Right ventricle myocardium inferior (tissue), 1 donor: ENCODE measurements at regions of chr2 and their contacts with region 1.

Region 1: DNA sequence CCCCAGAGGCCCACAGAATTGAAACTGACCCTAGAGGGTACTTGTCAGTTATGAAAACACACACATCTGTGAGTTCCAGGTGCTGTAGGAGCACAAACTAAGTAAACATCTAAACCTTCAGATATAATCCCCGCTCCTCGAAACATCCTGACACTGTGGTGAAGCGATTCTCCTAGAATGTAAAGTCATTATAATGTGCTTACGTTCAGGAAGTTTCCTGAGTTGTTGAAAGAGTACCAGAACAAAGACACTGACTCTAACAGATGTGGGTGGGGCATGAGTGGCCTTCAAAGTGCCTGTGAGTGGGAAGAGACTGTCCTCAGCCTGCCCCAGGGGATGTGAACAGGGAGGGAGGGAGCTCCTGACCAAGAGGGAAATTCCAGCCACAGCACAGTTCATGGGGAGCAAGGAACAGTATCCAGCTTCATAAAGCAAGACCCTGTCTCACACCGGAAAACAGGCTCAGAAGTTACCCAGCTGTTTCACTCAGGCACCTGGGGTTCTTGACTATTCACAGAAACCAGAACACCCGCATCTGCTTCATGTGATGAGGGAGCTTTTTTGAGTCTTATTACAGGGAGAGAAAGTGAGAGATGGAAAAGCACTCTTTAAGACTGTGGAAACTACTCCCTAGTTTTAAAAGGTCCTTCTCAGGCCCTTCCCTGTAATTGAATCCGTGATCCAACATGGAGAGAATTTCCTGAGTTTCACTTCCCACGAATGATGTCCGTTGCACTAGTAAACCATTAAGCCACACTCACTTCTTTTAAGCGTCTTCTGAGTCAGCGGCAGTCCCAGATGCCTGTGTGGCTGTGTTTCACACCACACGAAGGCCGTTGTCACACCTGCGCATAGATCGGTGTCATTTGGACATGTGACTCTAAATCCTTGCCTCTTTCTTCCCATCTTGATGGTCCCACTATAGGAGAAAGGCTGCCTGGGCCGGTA is 88.6 kb upstream of the EML6 start:
- DNase-seq: peak; percentile 70
- ATAC-seq: peak; percentile 59

Region 2: GRCh38 chr2:54599914-54600313 is 34.9 kb before region 1 on chr2:
- intact Hi-C with region 1: loop called (anchors 5 kb)
- DNase-seq: no peak
- ATAC-seq: peak; percentile 20

Region 3: DNA sequence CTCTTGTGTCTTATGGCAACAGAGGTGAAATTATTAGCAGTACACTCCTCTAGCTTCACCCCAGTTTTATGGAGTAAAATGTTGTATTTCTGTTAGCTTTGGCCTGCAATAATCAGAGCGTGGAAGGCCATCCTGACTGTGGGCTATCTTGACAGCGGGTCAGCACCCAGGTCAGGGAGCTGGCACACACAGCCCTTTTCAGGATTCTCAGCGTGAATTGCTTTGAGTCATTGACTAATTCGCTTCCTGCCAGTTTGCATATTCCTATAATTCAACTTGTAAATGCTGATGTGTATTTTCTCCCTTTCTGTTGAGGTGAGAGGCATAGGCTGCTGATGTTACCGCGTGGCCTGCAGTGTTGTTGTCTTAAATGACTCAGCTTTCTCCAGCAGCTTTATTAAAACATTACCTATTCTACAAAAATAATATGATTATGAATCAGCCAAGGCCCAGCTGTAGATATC is 21.0 kb before region 1 on chr2:
- intact Hi-C with region 1: loop called (anchors 1 kb)
- DNase-seq: no peak
- ATAC-seq: no peak